Activated CD4-positive, alpha-beta memory T cell treated with anti-CD3 and anti-CD28 coated beads for 36 hours (primary cell): ENCODE measurements at regions of chr2 and their contacts with region 1.

Region 1: GRCh38 chr2:189142893-189143759 is 36.4 kb downstream of the COL5A2 start:
- DNase-seq: peak; percentile 52
- H3K4me3 Mint-ChIP-seq: no peak overlapping the region
- H3K27ac Mint-ChIP-seq: no peak overlapping the region
- H3K4me1 Mint-ChIP-seq: no peaks in the 10 kb centered on the region
- H3K27me3 Mint-ChIP-seq: no peaks in the 10 kb centered on the region

Region 2: DNA sequence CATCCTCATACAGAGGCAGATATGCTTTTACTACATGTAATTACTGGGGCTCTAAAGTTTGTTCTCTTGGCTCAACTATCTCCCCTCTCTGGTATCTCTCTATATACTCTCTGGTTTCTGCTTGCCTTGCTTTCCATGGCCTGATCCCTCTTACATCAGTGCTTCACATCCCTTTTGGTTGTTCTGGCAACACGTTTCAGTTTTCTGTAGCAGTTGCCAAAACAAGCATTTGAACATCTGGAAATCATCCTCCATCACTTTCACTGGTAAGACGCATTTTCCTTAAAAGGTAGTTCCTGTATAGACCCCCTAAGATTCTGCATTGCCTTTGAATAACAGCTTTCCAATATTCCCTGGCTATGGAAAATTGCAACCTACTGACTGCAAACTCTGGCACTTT is 10.5 kb after region 1 on chr2:
- CTCF ChIA-PET with region 1: interaction called, 16 read pairs
- POLR2A ChIA-PET with region 1: no interaction called
- intact Hi-C with region 1: no loop called
- DNase-seq: no peak
- H3K4me3 Mint-ChIP-seq: no peak overlapping the region
- H3K27ac Mint-ChIP-seq: no peak overlapping the region
- H3K4me1 Mint-ChIP-seq: no peaks in the 10 kb centered on the region
- H3K27me3 Mint-ChIP-seq: no peaks in the 10 kb centered on the region